Activated CD4-positive, alpha-beta T cell treated with anti-CD3 and anti-CD28 coated beads, Interleukin-2, amount 10 ng/mL, durations not matched to agents 24 days and 14 days (primary cell): ENCODE measurements at regions of chr6 and their contacts with region 1.

Region 1: GRCh38 chr6:41920921-41921711 is at the starts of genes BYSL and MED20:
- DNase-seq: peak; percentile 99
- H3K4me3 Mint-ChIP-seq: peak within 1 kb of the TSS; percentile 100
- H3K27ac Mint-ChIP-seq: peak within 1 kb of the TSS; percentile 98
- H3K4me1 Mint-ChIP-seq: peaks cover 49% of the 10 kb centered on the region
- H3K27me3 Mint-ChIP-seq: no peaks in the 10 kb centered on the region
- total RNA-seq, gene BYSL: 79.6 and 81.4 TPM in 2 replicates
- total RNA-seq, gene MED20: 21.9 and 22.8 TPM in 2 replicates

Region 2: GRCh38 chr6:41072676-41073623 is 848.2 kb before region 1 on chr6 and contains the start of gene NFYA:
- intact Hi-C with region 1: loop called (anchors 2 kb)
- DNase-seq: peak; percentile 100
- H3K4me3 Mint-ChIP-seq: peak within 1 kb of the TSS; percentile 97
- H3K27ac Mint-ChIP-seq: peak within 1 kb of the TSS; percentile 100
- H3K4me1 Mint-ChIP-seq: peaks cover 59% of the 10 kb centered on the region
- H3K27me3 Mint-ChIP-seq: peaks cover 4% of the 10 kb centered on the region
- total RNA-seq, gene NFYA: 31.2 TPM in 2 replicates

Region 3: DNA sequence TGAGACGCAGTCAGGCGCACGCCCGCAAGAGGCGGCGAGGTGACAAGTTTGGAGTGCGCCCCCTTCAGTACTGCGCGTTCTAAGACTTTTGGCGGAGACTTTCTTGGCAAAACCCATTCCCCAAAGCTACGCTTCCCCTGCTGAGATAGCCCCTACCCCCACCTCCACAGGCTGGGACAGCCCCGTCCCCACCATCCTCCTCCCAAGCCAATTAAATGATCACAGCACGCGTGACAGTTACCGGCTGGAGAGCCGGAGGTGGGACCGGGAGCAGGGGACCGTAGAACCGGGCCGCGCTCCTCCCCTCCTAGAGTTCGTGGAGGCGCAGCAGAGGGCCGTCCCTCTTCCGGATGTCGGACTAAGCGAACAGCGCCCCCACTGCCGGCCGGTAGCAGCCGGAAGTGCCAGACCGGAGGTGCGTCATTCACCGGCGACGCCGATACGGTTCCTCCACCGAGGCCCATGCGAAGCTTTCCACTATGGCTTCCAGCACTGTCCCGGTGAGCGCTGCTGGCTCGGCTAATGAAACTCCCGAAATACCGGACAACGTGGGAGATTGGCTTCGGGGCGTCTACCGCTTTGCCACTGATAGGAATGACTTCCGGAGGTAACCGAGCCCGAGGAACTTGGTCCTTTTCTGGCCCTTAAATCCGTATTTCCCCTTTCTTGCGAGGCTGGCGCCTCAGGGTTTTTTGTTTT is 133.7 kb before region 1 on chr6 and contains the start of gene TOMM6:
- intact Hi-C with region 1: loop called (anchors 1 kb)
- DNase-seq: peak; percentile 99
- H3K4me3 Mint-ChIP-seq: peak within 1 kb of the TSS; percentile 95
- H3K27ac Mint-ChIP-seq: peak within 1 kb of the TSS; percentile 98
- H3K4me1 Mint-ChIP-seq: peaks cover 12% of the 10 kb centered on the region
- H3K27me3 Mint-ChIP-seq: peaks cover 12% of the 10 kb centered on the region
- total RNA-seq, gene TOMM6: 367 and 376 TPM in 2 replicates

Region 4: GRCh38 chr6:41895300-41896233 is 25.5 kb before region 1 on chr6 and contains the start of gene USP49:
- intact Hi-C with region 1: loop called (anchors 1 kb)
- DNase-seq: peak; percentile 97
- H3K4me3 Mint-ChIP-seq: no peak within 1 kb of the TSS
- H3K27ac Mint-ChIP-seq: peak within 1 kb of the TSS; percentile 90
- H3K4me1 Mint-ChIP-seq: peaks cover 12% of the 10 kb centered on the region
- H3K27me3 Mint-ChIP-seq: peaks cover 4% of the 10 kb centered on the region
- total RNA-seq, gene USP49: 5.8 and 6.3 TPM in 2 replicates

Region 5: GRCh38 chr6:41941280-41942066 is 20.4 kb after region 1 on chr6 and contains the start of gene CCND3:
- intact Hi-C with region 1: loop called (anchors 1 kb)
- DNase-seq: peak; percentile 97
- H3K4me3 Mint-ChIP-seq: peak within 1 kb of the TSS; percentile 100
- H3K27ac Mint-ChIP-seq: peak within 1 kb of the TSS; percentile 96
- H3K4me1 Mint-ChIP-seq: peaks cover 46% of the 10 kb centered on the region
- H3K27me3 Mint-ChIP-seq: no peaks in the 10 kb centered on the region
- total RNA-seq, gene CCND3: 483 and 491 TPM in 2 replicates

Region 6: DNA sequence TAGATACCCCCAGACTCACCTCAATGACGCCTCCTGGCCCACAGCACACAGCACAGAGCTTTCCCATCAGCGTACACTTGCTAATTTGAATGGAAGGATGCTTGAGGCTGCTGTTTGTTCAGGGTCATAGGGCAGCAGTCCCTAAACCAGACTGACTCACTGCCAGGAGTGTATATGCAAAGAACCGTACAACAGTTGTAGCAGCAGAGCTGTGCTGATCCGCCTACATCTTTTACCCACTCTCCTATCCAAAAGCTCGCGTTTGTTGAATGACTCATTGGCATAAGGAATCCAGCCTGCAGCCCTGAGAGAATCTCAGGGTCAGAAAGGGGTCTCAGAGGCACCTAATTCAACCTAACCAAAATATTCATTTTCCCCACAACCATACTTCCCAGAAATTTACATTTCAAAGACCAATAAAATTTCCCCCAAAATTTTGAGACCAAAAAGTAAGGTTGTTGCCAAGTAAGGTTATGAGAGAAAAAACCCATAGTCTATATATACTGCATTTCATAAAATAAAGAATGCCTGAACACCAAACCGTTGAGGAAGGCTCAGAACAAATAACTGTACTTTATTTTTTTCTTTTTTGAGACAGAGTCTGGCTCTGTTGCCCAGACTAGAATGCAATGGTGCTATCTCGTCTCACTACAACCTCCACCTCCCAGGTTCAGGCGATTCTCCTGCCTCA is 55.8 kb after region 1 on chr6:
- intact Hi-C with region 1: no loop called
- DNase-seq: no peak
- H3K4me3 Mint-ChIP-seq: peak overlapping the region; percentile 57
- H3K27ac Mint-ChIP-seq: peak overlapping the region; percentile 87
- H3K4me1 Mint-ChIP-seq: peaks cover 43% of the 10 kb centered on the region
- H3K27me3 Mint-ChIP-seq: no peaks in the 10 kb centered on the region

Region 7: GRCh38 chr6:42043787-42044475 is 122.8 kb after region 1 on chr6:
- intact Hi-C with region 1: loop called (anchors 1 kb)
- DNase-seq: peak; percentile 98
- H3K4me3 Mint-ChIP-seq: peak overlapping the region; percentile 73
- H3K27ac Mint-ChIP-seq: peak overlapping the region; percentile 74
- H3K4me1 Mint-ChIP-seq: peaks cover 84% of the 10 kb centered on the region
- H3K27me3 Mint-ChIP-seq: no peaks in the 10 kb centered on the region

Region 8: GRCh38 chr6:42217519-42218367 is 296.6 kb after region 1 on chr6 and contains the start of gene MRPS10:
- intact Hi-C with region 1: loop called (anchors 5 kb)
- DNase-seq: peak; percentile 97
- H3K4me3 Mint-ChIP-seq: peak within 1 kb of the TSS; percentile 98
- H3K27ac Mint-ChIP-seq: peak within 1 kb of the TSS; percentile 93
- H3K4me1 Mint-ChIP-seq: peaks cover 21% of the 10 kb centered on the region
- H3K27me3 Mint-ChIP-seq: no peaks in the 10 kb centered on the region
- total RNA-seq, gene MRPS10: 49.4 and 50.8 TPM in 2 replicates